ENCODE measurements at regions of chr10 and their contacts with region 1.

Region 1: DNA sequence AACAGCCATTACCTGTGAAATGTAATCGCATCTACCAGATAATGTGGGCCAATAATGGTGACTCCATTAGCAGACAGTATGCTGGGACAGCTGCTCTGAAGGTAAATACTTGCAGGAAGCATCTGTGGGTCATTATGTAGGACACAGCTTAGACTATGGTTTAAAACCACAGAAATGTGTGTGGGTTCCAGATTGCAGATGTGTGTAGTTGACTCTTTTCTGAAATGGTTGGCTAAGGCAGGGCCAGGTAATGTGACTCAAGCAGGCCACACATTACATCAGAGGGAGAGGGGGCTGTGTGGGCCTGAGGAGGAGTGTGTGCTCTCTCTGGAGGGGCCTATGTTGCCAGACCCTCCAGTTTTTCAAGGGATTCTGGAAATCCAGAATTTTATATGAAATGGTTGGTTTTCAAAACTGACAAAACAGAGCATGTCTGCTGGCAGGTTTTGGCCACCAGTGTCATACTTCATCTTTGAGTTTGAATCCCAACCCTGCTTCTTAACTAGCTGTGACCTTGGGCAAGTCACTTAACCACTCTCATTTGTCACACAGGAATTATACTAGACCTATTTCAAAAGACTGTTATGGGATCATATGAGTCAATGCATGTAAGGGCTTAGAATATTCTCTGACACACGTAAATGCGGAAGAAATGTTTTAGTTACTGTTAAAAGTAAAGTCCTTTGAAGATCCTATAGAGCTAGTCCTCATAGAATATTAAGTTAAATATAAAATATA is 64.5 kb downstream of the MCMBP start:
- DNase-seq: no peak
- ATAC-seq: peak; percentile 31
- H3K4me3 Mint-ChIP-seq: no peak overlapping the region
- H3K27ac Mint-ChIP-seq: peak overlapping the region; percentile 61
- H3K4me1 Mint-ChIP-seq: peaks cover 14% of the 10 kb centered on the region
- H3K27me3 Mint-ChIP-seq: no peaks in the 10 kb centered on the region
- CTCF ChIP-seq: no peak

Region 2: DNA sequence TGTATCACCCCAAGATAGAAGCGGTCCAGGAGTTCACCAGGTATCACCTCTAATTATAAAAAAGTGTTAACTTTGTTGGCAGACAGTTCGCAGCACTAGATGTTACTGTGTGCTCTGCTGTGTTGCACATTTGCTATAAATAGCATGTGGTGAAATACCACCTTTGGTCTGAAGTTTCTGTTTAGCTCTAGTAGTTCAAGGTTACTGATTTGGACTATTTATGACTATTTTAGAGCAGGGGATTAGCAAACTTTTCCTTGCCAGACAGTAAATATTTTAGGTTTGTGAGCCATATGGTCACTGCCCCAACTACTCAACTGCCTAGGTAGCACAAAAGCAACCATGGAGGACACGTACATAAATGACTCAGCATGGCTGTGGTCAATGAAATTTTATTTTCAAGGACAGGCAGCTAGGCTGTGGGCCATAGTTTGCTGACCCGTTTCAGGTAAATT is 687.7 kb before region 1 on chr10:
- CTCF ChIA-PET with region 1: no interaction called
- POLR2A ChIA-PET with region 1: no interaction called
- intact Hi-C with region 1: no loop called
- DNase-seq: no peak
- ATAC-seq: no peak
- H3K4me3 Mint-ChIP-seq: no peak overlapping the region
- H3K27ac Mint-ChIP-seq: no peak overlapping the region
- H3K4me1 Mint-ChIP-seq: peaks cover 4% of the 10 kb centered on the region
- H3K27me3 Mint-ChIP-seq: no peaks in the 10 kb centered on the region
- CTCF ChIP-seq: no peak

Region 3: GRCh38 chr10:119686439-119687191 is 121.5 kb before region 1 on chr10:
- CTCF ChIA-PET with region 1: interaction called, 4 read pairs
- POLR2A ChIA-PET with region 1: interaction called, 3 read pairs
- intact Hi-C with region 1: loop called (anchors 5 kb)
- DNase-seq: peak; percentile 68
- ATAC-seq: peak; percentile 93
- H3K4me3 Mint-ChIP-seq: peak overlapping the region; percentile 71
- H3K27ac Mint-ChIP-seq: peak overlapping the region; percentile 77
- H3K4me1 Mint-ChIP-seq: peaks cover 28% of the 10 kb centered on the region
- H3K27me3 Mint-ChIP-seq: peaks cover 3% of the 10 kb centered on the region
- CTCF ChIP-seq: peak; percentile 93

Region 4: DNA sequence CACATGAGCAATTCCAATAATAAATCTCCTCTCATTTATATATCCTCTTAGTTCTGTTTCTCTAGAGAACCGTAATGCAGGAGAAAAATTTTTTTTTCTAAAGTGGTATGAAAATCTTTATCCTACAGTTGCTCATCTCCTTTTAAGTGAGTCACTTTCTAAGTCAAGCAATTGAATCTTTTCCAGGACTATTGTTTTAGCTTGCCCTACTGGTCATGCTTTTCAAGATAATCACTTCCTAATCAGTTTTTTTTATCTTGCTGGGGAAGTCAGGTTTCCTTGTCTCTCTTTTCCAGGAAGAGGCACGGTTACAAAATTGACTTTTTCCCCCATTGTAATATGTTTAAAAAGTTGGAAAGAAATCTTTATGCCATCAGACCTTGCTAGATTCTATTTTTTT is 38.2 kb before region 1 on chr10:
- CTCF ChIA-PET with region 1: no interaction called
- POLR2A ChIA-PET with region 1: no interaction called
- intact Hi-C with region 1: loop called (anchors 5 kb)
- DNase-seq: no peak
- ATAC-seq: no peak
- H3K4me3 Mint-ChIP-seq: no peak overlapping the region
- H3K27ac Mint-ChIP-seq: no peak overlapping the region
- H3K4me1 Mint-ChIP-seq: peaks cover 24% of the 10 kb centered on the region
- H3K27me3 Mint-ChIP-seq: no peaks in the 10 kb centered on the region
- CTCF ChIP-seq: no peak

Measured in activated B cell treated with CpG ODN at 0.5 μM for 24 hours (primary cell).